Activated naive CD4-positive, alpha-beta T cell treated with anti-CD3 and anti-CD28 coated beads for 36 hours (primary cell): ENCODE measurements at regions of chr6 and their contacts with region 1.

Region 1: GRCh38 chr6:44387346-44388133 is at the start of gene CDC5L:
- DNase-seq: peak; percentile 96
- H3K4me3 Mint-ChIP-seq: peak within 1 kb of the TSS; percentile 93
- H3K27ac Mint-ChIP-seq: peak within 1 kb of the TSS; percentile 96
- H3K4me1 Mint-ChIP-seq: peaks cover 34% of the 10 kb centered on the region
- H3K27me3 Mint-ChIP-seq: no peaks in the 10 kb centered on the region
- total RNA-seq, gene CDC5L: 17.9 to 18.8 TPM

Region 2: DNA sequence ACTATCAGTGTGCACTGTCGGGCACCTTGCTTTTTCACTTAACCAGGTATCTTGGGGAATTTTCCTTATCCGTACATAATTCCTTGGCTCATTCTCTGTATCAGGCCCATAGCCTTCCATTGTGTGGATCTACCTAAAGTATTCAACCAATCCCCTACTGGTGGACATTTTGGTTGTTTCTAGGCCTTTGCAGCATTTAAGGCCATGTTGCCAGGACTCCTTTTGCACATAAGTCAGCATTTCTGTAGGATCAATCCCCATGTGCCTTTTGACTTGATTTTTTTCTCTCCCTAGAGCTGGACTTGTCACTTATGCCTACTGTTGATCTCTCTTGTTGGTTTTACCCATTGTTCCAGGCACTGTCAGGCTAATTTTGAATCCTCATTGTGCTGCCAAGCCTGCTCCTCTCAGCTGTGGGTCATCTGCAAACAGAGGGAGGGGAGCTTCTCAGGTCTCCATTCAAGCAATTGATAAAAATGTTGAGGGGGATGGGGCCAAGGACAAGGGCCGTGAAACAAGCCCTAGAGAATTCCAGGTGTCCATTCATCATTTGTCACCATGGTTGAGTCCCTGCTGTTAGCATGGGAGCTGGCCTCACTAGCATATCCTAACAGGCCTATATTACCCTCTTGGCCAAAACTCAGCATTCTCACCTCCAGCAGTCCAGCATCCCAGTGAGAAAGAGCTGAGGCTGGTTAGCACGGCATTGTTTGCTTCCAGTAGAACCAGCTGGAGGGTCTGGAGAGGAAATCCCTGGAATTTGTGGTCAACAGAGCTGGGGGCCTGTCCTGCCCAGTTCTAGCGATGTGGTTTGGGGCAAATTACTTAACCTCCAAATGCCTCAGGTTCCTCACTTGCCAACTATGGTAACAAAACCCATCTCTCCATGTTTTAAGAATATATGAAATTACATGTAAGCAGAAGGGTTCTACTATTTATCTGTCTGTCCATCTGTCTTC is 438.7 kb before region 1 on chr6:
- CTCF ChIA-PET with region 1: no interaction called
- intact Hi-C with region 1: no loop called
- DNase-seq: no peak
- H3K4me3 Mint-ChIP-seq: no peak overlapping the region
- H3K27ac Mint-ChIP-seq: no peak overlapping the region
- H3K4me1 Mint-ChIP-seq: no peaks in the 10 kb centered on the region
- H3K27me3 Mint-ChIP-seq: no peaks in the 10 kb centered on the region

Region 3: GRCh38 chr6:44127186-44128019 is 260.1 kb before region 1 on chr6 and contains the starts of genes MRPL14 and TMEM63B:
- CTCF ChIA-PET with region 1: no interaction called
- intact Hi-C with region 1: loop called (anchors 1 kb)
- DNase-seq: peak; percentile 86
- H3K4me3 Mint-ChIP-seq: peak within 1 kb of the TSS; percentile 88
- H3K27ac Mint-ChIP-seq: peak within 1 kb of the TSS; percentile 93
- H3K4me1 Mint-ChIP-seq: peaks cover 41% of the 10 kb centered on the region
- H3K27me3 Mint-ChIP-seq: no peaks in the 10 kb centered on the region
- total RNA-seq, gene MRPL14: 40.9 to 41.0 TPM
- total RNA-seq, gene TMEM63B: 7.8 to 8.3 TPM

Region 4: GRCh38 chr6:44312901-44313788 is 74.4 kb before region 1 on chr6 and contains the start of gene AARS2:
- CTCF ChIA-PET with region 1: interaction called, 4 read pairs
- intact Hi-C with region 1: loop called (anchors 1 kb)
- DNase-seq: peak; percentile 95
- H3K4me3 Mint-ChIP-seq: peak within 1 kb of the TSS; percentile 96
- H3K27ac Mint-ChIP-seq: peak within 1 kb of the TSS; percentile 79
- H3K4me1 Mint-ChIP-seq: peaks cover 17% of the 10 kb centered on the region
- H3K27me3 Mint-ChIP-seq: no peaks in the 10 kb centered on the region
- total RNA-seq, gene AARS2: 11.6 to 12.9 TPM

Region 5: GRCh38 chr6:44407951-44408670 is 20.6 kb after region 1 on chr6:
- CTCF ChIA-PET with region 1: no interaction called
- intact Hi-C with region 1: loop called (anchors 2 kb)
- DNase-seq: no peak
- H3K4me3 Mint-ChIP-seq: no peak overlapping the region
- H3K27ac Mint-ChIP-seq: no peak overlapping the region
- H3K4me1 Mint-ChIP-seq: peaks cover 39% of the 10 kb centered on the region
- H3K27me3 Mint-ChIP-seq: no peaks in the 10 kb centered on the region